Esophagus squamous epithelium (tissue), 5 donors: ENCODE measurements at regions of chr11 and their contacts with region 1.

Region 1: GRCh38 chr11:36564376-36565030 is 3.3 kb upstream of the RAG1 start:
- DNase-seq: no peak
- H3K4me3 ChIP-seq: peak overlapping the region in 3 of 4 donors; percentile 9 to 56 (median 34)
- H3K27ac ChIP-seq: no peak overlapping the region
- H3K4me1 ChIP-seq: peaks cover 0 to 6% (median 3%) of the 10 kb centered on the region in 3 donors
- H3K27me3 ChIP-seq: peaks cover 0 to 11% (median 0%) of the 10 kb centered on the region in 4 donors
- CTCF ChIP-seq: peak; percentile 46 to 61 (median 54)
- POLR2A ChIP-seq: no peak

Region 2: DNA sequence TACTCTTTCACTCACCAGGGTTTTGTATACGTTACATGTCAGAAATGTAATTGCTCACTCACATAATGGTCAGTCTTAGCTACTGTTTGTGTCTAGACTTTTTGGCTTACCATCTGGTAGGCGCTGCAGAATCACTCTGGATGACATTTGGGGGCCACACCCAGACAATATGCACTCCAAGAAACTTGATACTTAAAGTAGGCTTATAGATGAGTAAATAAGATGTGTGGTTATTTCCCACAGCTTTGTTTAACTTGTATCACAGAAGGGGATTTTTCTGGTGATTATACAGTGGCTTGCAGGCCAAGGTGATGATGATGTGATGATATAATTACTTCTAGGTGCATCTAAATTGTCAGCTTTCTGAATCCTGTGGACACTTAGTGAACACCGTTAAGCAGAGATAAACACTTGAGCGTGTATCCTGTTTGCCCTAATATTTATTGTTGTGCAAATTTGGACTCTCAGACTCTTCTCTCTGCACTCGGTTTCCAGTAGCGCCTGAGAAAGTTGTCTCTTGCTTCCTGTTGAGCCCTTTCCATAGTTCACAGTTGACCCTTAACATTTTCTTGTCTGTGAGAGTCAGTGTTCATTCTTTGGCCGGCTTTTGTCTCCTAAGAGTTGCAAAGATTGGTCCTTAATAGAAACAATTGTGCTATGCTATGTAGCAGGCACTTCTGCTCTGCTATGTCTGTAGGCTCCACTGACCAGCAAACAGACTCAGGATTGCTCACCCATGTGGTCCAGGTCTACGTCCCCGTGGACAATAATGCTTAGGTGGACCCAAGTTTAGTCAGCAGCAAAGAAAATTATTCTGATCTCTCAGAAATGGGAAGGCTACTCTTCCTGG is 179.2 kb before region 1 on chr11:
- intact Hi-C with region 1: no loop called
- DNase-seq: no peak
- H3K4me3 ChIP-seq: no peak overlapping the region
- H3K27ac ChIP-seq: no peak overlapping the region
- H3K4me1 ChIP-seq: peaks cover 0 to 7% (median 0%) of the 10 kb centered on the region in 3 donors
- H3K27me3 ChIP-seq: no peaks in the 10 kb centered on the region
- CTCF ChIP-seq: no peak
- POLR2A ChIP-seq: no peak

Region 3: GRCh38 chr11:36465449-36466163 is 98.9 kb before region 1 on chr11:
- intact Hi-C with region 1: no loop called
- DNase-seq: no peak
- H3K4me3 ChIP-seq: no peak overlapping the region
- H3K27ac ChIP-seq: peak overlapping the region in 2 of 4 donors; percentile 9 to 11
- H3K4me1 ChIP-seq: peaks cover 5 to 45% (median 7%) of the 10 kb centered on the region in 3 donors
- H3K27me3 ChIP-seq: no peaks in the 10 kb centered on the region
- CTCF ChIP-seq: no peak
- POLR2A ChIP-seq: no peak

Region 4: DNA sequence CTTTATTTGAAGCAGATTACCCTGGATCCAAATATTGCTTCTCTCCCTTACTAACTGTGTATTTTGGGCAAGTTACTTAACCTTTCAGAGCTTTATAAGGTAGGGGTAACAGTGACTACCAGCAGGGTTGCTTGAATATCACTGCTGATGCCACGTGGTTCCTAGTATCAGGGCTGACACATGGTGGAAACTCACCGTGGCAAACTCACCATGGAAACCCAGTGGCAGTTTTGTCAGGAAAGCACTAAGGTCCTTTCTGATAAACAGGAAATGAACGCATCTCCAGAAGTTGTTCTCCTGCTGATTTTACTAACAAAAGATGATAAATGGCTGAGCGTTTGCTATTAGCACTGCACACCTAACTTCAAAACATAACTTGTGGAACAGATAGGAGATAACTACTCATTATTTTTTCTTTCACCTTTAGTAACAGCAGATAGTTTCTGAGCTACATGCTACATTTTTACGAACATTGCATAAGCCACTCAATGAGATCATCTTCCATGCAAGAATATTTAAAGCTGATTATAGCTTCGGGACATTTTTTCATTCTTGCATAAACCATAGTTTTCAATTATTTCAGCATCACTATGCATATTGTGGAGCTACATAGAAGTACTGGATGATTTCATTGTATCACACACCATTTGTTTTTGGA is 93.2 kb after region 1 on chr11:
- intact Hi-C with region 1: no loop called
- DNase-seq: no peak
- H3K4me3 ChIP-seq: no peak overlapping the region
- H3K27ac ChIP-seq: no peak overlapping the region
- H3K4me1 ChIP-seq: no peaks in the 10 kb centered on the region
- H3K27me3 ChIP-seq: no peaks in the 10 kb centered on the region
- CTCF ChIP-seq: no peak
- POLR2A ChIP-seq: no peak

Region 5: DNA sequence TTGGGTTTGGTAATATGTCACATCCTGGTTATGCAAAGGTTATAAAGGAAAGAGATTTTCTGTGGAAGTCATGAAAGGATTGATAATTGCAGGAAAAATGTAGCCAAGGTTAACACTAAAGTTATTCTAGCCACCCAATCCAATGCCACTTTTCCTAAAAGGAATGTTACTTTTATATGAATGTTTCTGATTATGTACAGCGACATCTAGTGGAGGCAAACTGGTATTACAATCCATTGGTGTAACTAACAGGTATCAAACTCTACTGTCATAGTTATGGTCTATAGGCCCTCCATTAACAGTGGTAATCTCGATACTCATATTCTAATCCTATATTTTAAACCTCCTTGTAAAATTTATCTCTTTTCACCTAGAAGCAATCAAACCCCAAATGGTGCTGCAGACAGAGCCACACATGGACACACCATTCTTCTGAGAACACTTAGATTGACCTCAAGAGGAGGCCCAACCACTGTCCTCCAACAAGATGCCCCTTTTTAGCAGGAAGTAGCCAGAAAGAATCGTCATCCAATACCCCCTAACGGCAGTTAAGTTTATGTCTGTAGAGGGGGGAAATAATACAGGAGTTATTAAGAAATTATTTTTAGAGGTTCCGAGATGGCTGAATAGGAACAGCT is 108.4 kb after region 1 on chr11:
- intact Hi-C with region 1: loop called (anchors 10 kb)
- DNase-seq: no peak
- H3K4me3 ChIP-seq: no peak overlapping the region
- H3K27ac ChIP-seq: no peak overlapping the region
- H3K4me1 ChIP-seq: no peaks in the 10 kb centered on the region
- H3K27me3 ChIP-seq: no peaks in the 10 kb centered on the region
- CTCF ChIP-seq: peak; percentile 16 to 81 (median 64)
- POLR2A ChIP-seq: no peak

Region 6: DNA sequence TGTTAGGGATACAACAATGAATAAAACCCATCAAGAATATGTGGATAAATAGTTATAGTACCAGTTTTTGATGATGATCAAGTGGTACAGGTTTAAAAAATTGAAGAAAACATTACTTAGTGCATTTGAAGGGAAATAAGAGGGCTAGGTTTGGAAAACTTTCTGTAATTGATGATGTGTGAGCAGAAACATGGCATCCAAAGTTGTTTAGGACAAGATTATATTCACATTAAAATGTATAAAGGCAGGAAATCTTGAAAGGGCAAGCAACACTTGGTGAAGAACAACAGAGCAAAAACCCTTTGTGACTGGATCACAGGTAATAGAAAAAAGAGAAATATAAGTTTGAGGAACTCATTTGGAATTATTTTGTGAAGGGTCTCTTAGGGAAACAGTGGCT is 605.8 kb after region 1 on chr11:
- intact Hi-C with region 1: no loop called
- DNase-seq: no peak
- H3K4me3 ChIP-seq: no peak overlapping the region
- H3K27ac ChIP-seq: no peak overlapping the region
- H3K4me1 ChIP-seq: no peaks in the 10 kb centered on the region
- H3K27me3 ChIP-seq: no peaks in the 10 kb centered on the region
- CTCF ChIP-seq: no peak
- POLR2A ChIP-seq: no peak